Activated CD4-positive, alpha-beta T cell treated with anti-CD3 and anti-CD28 coated beads, Interleukin-2, amount 10 ng/mL, durations not matched to agents 24 days and 14 days (primary cell): ENCODE measurements at regions of chr16 and their contacts with region 1.

Region 1: DNA sequence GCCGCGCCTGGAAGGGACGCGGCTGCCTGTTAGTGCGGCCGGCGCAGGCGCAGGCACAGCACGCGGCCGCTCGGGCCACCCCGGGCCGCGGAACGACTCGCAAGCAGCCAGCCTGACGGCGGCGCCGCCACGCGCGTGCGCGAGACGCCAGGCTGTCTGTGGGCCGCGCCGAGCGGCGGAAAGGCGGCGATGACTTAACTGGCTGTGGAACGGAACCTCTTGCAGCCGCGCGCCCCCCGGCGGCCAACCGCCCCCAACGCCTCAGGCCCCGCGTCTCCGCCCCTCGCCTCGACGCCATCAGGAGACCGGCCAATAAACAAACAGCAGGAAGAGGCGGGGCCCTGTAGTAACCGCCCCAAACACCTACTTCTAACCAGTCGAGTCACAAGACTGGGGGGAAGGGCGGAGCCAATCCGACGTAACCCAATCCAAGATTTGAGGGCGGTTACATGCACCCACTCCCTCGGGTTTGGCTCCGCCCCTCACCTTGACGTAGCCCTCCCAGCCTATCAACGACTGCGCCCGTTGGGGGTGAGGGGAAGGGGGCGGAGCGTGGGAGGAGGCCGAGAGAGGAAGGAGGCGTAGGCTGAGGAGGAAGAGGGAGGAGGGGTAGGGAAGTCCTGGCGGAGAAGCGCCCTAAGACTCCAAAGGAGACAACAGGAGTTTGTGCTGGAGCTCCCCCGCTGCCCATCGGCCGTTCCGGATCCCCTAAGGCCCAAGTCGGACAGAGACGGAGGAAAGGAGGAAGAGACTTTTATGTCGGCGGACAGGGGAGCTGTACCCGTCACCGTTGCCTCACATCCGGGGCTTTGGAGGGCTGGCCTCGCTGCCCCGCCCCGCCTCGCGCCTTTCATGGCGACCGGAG is at the start of gene FBRS:
- DNase-seq: peak; percentile 100
- H3K4me3 Mint-ChIP-seq: peak within 1 kb of the TSS; percentile 94
- H3K27ac Mint-ChIP-seq: peak within 1 kb of the TSS; percentile 100
- H3K4me1 Mint-ChIP-seq: peaks cover 38% of the 10 kb centered on the region
- H3K27me3 Mint-ChIP-seq: no peaks in the 10 kb centered on the region
- total RNA-seq, gene FBRS: 121 and 124 TPM in 2 replicates

Region 2: GRCh38 chr16:30370444-30371247 is 287.5 kb before region 1 on chr16 and contains the start of gene TBC1D10B:
- intact Hi-C with region 1: loop called (anchors 1 kb)
- DNase-seq: peak; percentile 100
- H3K4me3 Mint-ChIP-seq: peak within 1 kb of the TSS; percentile 90
- H3K27ac Mint-ChIP-seq: peak within 1 kb of the TSS; percentile 94
- H3K4me1 Mint-ChIP-seq: peaks cover 42% of the 10 kb centered on the region
- H3K27me3 Mint-ChIP-seq: peaks cover 4% of the 10 kb centered on the region
- total RNA-seq, gene TBC1D10B: 68.9 TPM in 2 replicates

Region 3: DNA sequence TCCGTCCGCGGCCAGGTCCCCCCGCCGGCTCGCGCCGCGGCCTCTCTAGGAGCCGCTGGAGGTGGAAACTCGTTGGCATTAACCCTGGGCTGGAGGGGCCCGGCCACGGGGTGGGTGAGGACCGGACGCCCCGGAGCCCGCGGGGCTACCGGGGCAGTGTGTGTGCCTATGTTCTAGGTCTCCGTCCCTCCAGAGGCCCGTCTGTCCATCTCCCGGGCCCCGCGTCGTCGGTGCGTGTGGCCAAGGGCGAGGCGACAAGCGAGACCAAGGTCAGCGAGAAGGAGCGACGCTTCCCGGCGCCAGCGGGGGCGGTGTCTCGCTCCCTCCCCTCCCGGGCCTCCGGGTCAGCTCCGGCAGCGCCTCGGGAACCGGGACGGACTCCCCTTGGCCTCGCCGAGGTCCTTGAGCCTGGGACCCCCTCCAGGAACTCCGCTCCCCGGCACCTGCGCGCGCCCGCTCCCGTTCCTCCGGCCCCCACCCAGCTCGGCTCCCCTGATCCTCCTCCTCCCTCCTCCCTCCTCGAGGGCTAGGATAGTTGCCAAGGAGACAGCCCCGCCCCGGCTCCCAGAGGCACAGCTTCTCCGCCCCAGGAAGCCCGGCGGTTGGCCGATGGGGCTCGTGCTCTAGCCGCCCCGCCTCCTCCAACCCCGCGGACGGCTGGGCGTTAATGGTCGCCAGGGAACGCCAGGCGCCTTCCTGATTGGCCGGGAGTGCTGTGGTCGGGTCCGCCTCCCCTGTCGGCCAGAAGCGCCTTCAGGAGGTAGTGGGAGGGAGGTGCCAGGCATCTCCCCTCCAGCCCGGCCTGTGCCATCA is 131.1 kb before region 1 on chr16:
- intact Hi-C with region 1: loop called (anchors 1 kb)
- DNase-seq: peak; percentile 98
- H3K4me3 Mint-ChIP-seq: peak overlapping the region; percentile 81
- H3K27ac Mint-ChIP-seq: peak overlapping the region; percentile 81
- H3K4me1 Mint-ChIP-seq: peaks cover 26% of the 10 kb centered on the region
- H3K27me3 Mint-ChIP-seq: no peaks in the 10 kb centered on the region

Region 4: DNA sequence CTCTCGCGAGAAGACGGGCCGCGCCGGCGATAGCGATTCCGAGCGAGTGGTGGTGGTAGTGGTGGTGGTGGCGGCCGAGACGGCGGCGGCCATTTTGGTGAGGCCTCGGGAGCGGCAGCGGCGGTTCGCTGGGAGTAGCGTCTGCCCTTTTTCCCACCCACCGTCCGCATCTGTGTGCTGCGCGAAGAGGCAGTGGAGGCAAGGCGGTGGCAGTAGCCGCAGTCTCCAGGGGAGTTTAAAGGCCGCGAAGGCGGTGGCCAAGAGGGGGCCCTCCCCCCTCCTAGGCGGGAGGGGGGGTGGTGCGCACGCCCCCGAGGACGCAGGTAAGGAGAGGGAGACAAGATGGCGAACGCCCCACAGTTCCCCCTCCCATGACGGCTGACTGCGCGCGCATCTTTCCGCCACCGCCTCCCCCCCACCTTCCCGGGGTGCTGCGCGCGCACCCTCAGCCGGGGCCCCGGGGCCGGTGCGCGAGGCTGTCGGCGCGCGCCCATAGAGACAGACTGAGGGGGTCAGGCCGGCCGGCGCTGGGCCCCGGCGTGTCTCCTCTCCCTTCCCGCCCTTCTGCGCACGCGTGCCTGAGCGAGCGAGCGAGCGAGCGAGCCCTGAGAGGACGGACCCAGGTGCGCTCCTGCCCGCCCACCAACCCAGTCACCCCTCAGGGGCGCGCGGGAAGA is 40.2 kb after region 1 on chr16:
- intact Hi-C with region 1: loop called (anchors 1 kb)
- DNase-seq: peak; percentile 100
- H3K4me3 Mint-ChIP-seq: peak overlapping the region; percentile 97
- H3K27ac Mint-ChIP-seq: peak overlapping the region; percentile 100
- H3K4me1 Mint-ChIP-seq: peaks cover 34% of the 10 kb centered on the region
- H3K27me3 Mint-ChIP-seq: no peaks in the 10 kb centered on the region

Region 5: DNA sequence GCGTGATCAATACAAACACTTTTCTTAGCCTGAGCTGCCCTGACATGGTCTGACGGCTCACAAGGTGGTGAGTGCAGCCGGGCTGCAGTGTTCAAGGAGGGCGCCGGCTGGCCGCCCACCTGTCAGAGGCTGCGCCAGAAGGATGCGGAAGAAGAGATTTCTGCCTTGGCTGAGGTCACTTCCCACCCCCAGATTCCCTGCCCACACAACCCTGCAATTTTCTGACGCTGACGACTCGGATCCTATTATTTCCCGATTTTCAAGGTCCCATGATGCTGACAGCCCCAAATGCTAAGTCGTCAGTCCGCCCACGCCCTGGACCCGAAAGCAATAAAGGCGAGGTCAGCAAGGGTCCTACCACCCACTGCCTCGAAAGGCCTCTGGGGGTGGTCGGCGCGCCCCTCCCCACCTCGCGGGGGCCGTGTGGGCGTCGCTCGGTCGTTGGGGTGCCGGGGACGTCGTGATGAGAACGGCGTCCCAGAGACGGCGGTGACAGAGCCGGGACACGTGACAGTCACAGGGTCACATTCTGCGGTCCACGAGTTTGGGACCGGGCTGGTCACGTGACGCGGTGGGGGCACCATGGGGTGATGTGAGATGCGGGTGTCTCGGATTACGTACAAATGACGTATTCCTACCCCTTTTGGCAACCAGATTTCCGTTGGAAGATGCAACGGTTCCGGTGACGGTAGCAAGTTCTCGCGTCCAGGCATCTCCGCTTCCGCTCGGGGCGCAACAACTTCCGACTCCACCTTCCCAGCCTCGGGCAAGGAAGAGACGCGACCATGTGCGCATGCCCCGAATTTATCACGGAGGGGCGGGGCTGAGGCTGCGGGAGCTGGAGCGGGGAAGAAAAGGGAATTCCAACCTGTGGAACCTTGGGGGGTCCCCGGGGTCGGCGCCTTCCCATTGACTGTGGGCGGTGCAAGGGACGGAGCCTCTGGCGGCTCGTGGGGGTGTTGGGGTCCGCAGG is 374.9 kb after region 1 on chr16 and contains the start of gene STX4:
- intact Hi-C with region 1: loop called (anchors 1 kb)
- DNase-seq: peak; percentile 99
- H3K4me3 Mint-ChIP-seq: peak within 1 kb of the TSS; percentile 93
- H3K27ac Mint-ChIP-seq: peak within 1 kb of the TSS; percentile 96
- H3K4me1 Mint-ChIP-seq: peaks cover 15% of the 10 kb centered on the region
- H3K27me3 Mint-ChIP-seq: no peaks in the 10 kb centered on the region
- total RNA-seq, gene STX4: 49.1 and 54.8 TPM in 2 replicates